Naive thymus-derived CD8-positive, alpha-beta T cell (primary cell): ENCODE measurements at regions of chr7 and their contacts with region 1.

Region 1: DNA sequence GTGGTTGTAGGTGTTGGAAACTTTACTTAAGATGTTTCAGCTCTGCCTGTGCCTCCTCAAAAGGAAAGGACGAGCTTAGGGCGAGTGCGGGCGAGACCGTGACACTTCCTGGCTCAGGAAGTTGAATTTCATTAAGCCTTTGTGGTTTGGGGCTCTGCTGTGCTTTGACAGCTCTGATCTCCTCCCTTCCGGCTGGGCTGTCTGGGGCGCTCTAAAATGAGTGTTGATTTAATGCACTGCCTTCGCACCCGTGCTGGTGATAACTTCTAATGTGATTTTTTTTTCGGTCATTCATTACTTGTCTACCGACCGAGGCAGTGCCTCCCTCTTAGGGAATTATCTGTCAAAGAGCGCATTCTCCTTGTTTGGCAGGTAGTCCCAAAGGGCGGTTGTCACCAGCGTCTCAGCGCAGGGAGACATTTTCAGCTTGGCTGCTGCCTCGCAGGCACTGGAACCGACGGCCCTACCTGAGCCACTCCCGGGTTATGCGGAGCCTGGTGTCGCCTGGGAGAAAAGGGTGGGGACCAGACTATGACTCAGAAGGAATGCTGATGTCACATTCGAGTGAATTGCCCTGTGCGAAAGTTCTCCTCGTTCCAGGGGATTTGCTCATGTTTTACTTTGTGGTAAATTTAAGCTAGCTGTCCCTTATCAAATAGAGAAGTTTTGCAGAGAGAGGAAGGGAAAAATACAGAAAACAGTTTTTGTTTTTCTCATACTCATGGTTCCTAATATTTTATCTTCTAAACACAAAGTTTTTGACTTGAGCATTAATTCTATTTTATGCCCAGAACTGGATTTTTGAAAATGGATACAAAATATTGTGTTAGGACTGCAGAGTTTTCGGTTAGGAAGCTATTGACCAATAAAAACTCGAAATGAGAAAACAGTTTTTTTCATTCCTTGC is 920 bp downstream of the TES start:
- DNase-seq: peak; percentile 54 to 87 (median 76)
- ATAC-seq: peak; percentile 80 to 85
- H3K4me3 Mint-ChIP-seq: peak overlapping the region; percentile 88 to 99 (median 98)
- H3K27ac Mint-ChIP-seq: peak overlapping the region; percentile 97 to 99 (median 98)
- H3K4me1 Mint-ChIP-seq: peaks cover 24 to 64% (median 48%) of the 10 kb centered on the region in 4 donors
- H3K27me3 Mint-ChIP-seq: no peaks in the 10 kb centered on the region

Region 2: DNA sequence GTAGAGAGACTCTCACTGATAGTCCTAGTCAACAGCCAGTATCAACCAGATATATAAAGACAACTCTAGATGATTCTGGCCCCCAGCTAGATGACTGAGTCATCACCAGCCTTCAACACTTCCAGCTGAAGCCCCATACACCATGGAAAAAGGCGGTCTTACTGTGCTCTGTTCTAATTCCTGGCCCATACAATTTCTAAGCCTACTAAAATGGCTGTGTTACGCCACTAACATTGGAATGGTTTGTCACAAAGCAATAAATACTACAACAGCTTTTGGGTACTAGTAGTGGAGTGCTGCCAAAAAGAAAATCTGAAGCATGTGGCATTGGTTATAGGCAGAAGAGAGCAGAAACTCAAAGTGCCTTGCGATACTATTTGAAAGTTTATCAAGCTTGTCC is 13.9 kb before region 1 on chr7:
- POLR2A ChIA-PET with region 1: interaction called, 27 read pairs
- DNase-seq: no peak
- ATAC-seq: no peak
- H3K4me3 Mint-ChIP-seq: no peak overlapping the region
- H3K27ac Mint-ChIP-seq: no peak overlapping the region
- H3K4me1 Mint-ChIP-seq: no peaks in the 10 kb centered on the region
- H3K27me3 Mint-ChIP-seq: no peaks in the 10 kb centered on the region

Region 3: DNA sequence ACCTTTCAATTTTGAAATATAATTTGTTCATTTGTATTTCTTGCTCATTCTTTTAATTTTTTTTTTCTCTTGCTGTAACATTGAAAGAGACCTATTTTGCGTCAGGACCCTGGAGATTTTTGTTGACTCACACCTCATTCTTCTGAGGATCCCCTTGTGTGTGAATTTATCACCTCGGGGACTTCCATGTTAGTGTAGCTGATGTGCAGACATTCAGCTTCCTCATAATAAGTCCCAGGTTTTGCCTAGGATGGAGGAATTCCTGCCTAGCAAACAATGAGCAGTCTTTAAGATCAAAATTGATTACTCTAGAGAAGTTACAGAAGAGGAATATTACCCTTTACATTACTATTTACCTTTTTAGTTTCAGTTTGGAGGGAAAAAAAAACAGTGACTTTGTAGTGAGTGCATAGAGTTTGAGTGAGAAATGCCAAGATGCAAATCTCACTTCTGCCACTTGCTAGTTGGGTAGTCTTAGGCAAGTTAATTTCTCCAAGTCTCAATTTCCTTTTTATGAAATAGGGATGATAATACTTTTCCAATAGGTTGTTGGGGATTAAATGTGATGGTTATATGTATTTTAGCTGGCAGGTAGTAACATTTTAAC is 13.3 kb after region 1 on chr7:
- POLR2A ChIA-PET with region 1: interaction called, 62 read pairs
- DNase-seq: no peak
- ATAC-seq: peak; percentile 54 to 72
- H3K4me3 Mint-ChIP-seq: peak overlapping the region; percentile 26 to 82 (median 66)
- H3K27ac Mint-ChIP-seq: peak overlapping the region in 9 of 10 donors; percentile 29 to 79 (median 71)
- H3K4me1 Mint-ChIP-seq: peaks cover 42 to 93% (median 88%) of the 10 kb centered on the region in 4 donors
- H3K27me3 Mint-ChIP-seq: no peaks in the 10 kb centered on the region

Region 4: GRCh38 chr7:116236020-116236630 is 24.9 kb after region 1 on chr7:
- POLR2A ChIA-PET with region 1: interaction called, 62 read pairs
- DNase-seq: peak; percentile 15 to 74 (median 52)
- ATAC-seq: peak; percentile 70 to 77
- H3K4me3 Mint-ChIP-seq: peak overlapping the region in 1 of 10 donors; percentile 18
- H3K27ac Mint-ChIP-seq: peak overlapping the region in 4 of 10 donors; percentile 35 to 69 (median 51)
- H3K4me1 Mint-ChIP-seq: peaks cover 23 to 87% (median 70%) of the 10 kb centered on the region in 4 donors
- H3K27me3 Mint-ChIP-seq: no peaks in the 10 kb centered on the region